Common myeloid progenitor, CD34-positive (primary cell): ENCODE measurements at regions of chr4 and their contacts with region 1.

Region 1: GRCh38 chr4:175536852-175537453 is 275.1 kb downstream of the GPM6A start:
- DNase-seq: peak; percentile 60 to 76 (median 69)
- H3K4me3 ChIP-seq: no peak overlapping the region
- H3K27ac ChIP-seq: no peak overlapping the region
- H3K4me1 ChIP-seq: no peaks in the 10 kb centered on the region
- H3K27me3 ChIP-seq: peaks cover 0 to under 1% (median 0%) of the 10 kb centered on the region in 5 experiments

Region 2: GRCh38 chr4:174764105-174764729 is 772.7 kb before region 1 on chr4:
- CTCF ChIA-PET with region 1: interaction called, 30 read pairs
- POLR2A ChIA-PET with region 1: no interaction called
- DNase-seq: peak; percentile 32 to 67 (median 55)
- H3K4me3 ChIP-seq: no peak overlapping the region
- H3K27ac ChIP-seq: no peak overlapping the region
- H3K4me1 ChIP-seq: no peaks in the 10 kb centered on the region
- H3K27me3 ChIP-seq: peaks cover 0 to 2% (median 0%) of the 10 kb centered on the region in 5 experiments

Region 3: DNA sequence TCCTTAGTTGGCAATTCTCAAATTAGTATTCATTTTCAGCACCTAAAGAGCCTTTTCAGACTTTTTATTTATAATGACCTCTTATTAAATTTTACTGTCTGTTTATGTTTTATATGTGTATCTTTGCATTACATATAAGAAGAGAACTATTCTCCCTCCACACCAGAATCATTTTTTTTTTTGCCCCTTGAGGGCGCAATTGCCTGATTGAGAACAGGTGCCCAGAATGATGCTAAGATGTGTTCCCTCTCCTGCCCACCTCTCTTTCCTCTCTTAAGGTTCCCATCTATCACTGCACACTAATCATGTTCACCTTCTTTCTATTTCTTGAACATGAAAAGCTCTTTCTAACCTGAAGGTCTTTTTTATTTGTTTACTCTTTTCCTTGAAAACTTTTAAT is 663.0 kb before region 1 on chr4:
- CTCF ChIA-PET with region 1: interaction called, 17 read pairs
- POLR2A ChIA-PET with region 1: no interaction called
- DNase-seq: peak; percentile 1 to 23 (median 15)
- H3K4me3 ChIP-seq: no peak overlapping the region
- H3K27ac ChIP-seq: no peak overlapping the region
- H3K4me1 ChIP-seq: no peaks in the 10 kb centered on the region
- H3K27me3 ChIP-seq: peaks cover 0 to 2% (median 0%) of the 10 kb centered on the region in 5 experiments

Region 4: GRCh38 chr4:175622887-175623286 is 85.9 kb after region 1 on chr4:
- CTCF ChIA-PET with region 1: no interaction called
- POLR2A ChIA-PET with region 1: no interaction called
- DNase-seq: no peak
- H3K4me3 ChIP-seq: no peak overlapping the region
- H3K27ac ChIP-seq: no peak overlapping the region
- H3K4me1 ChIP-seq: no peaks in the 10 kb centered on the region
- H3K27me3 ChIP-seq: no peaks in the 10 kb centered on the region

Region 5: DNA sequence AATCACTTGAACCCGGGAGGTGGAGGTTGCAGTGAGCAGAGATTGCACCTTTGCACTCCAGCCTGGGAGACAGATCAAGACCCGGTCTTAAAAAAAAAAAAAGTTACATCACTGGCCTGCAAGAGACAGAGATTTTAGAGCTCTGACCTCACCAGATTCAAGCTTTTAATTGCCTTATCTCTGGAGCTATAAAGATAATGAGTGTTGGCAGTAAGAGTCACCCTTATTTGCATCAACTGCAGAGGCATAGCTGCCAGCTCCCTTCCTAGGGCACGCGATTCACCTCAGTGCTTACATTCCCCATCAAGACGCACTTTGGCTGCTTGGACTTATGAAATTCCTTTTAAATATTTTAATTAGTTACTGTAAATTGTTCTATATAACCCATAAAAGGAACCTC is 670.9 kb after region 1 on chr4:
- CTCF ChIA-PET with region 1: no interaction called
- POLR2A ChIA-PET with region 1: no interaction called
- DNase-seq: no peak
- H3K4me3 ChIP-seq: no peak overlapping the region
- H3K27ac ChIP-seq: no peak overlapping the region
- H3K4me1 ChIP-seq: no peaks in the 10 kb centered on the region
- H3K27me3 ChIP-seq: no peaks in the 10 kb centered on the region